ENCODE measurements at regions of chrX and their contacts with region 1.

Region 1: GRCh38 chrX:71565474-71566041 is 12.7 kb upstream of the GCNA start:
- DNase-seq: no peak
- ATAC-seq: peak in 2 of 8 donors; percentile 48 to 53
- H3K4me3 ChIP-seq: no peak overlapping the region
- H3K27ac ChIP-seq: peak overlapping the region in 1 of 10 donors; percentile 22
- H3K4me1 ChIP-seq: peaks cover 0 to 12% (median 0%) of the 10 kb centered on the region in 9 donors
- H3K27me3 ChIP-seq: peaks cover 0 to 16% (median 0%) of the 10 kb centered on the region in 7 donors
- CTCF ChIP-seq: no peak

Region 2: GRCh38 chrX:71378732-71379131 is 186.8 kb before region 1 on chrX:
- intact Hi-C with region 1: loop called in 1 of 10 experiments (anchors 10 kb)
- DNase-seq: no peak
- ATAC-seq: peak in 3 of 8 donors; percentile 45 to 63 (median 52)
- H3K4me3 ChIP-seq: no peak overlapping the region
- H3K27ac ChIP-seq: peak overlapping the region in 1 of 10 donors; percentile 31
- H3K4me1 ChIP-seq: no peaks in the 10 kb centered on the region
- H3K27me3 ChIP-seq: no peaks in the 10 kb centered on the region
- CTCF ChIP-seq: no peak

Region 3: GRCh38 chrX:71393919-71394318 is 171.6 kb before region 1 on chrX:
- intact Hi-C with region 1: loop called in 2 of 10 experiments (anchors 10 kb)
- DNase-seq: no peak
- ATAC-seq: no peak
- H3K4me3 ChIP-seq: no peak overlapping the region
- H3K27ac ChIP-seq: no peak overlapping the region
- H3K4me1 ChIP-seq: no peaks in the 10 kb centered on the region
- H3K27me3 ChIP-seq: no peaks in the 10 kb centered on the region
- CTCF ChIP-seq: no peak

Region 4: GRCh38 chrX:71400710-71401109 is 164.8 kb before region 1 on chrX:
- intact Hi-C with region 1: loop called in 2 of 10 experiments (anchors 10 kb)
- DNase-seq: no peak
- ATAC-seq: no peak
- H3K4me3 ChIP-seq: no peak overlapping the region
- H3K27ac ChIP-seq: no peak overlapping the region
- H3K4me1 ChIP-seq: no peaks in the 10 kb centered on the region
- H3K27me3 ChIP-seq: no peaks in the 10 kb centered on the region
- CTCF ChIP-seq: no peak

Region 5: GRCh38 chrX:71420686-71421085 is 144.9 kb before region 1 on chrX:
- intact Hi-C with region 1: loop called in 1 of 10 experiments (anchors 10 kb)
- DNase-seq: no peak
- ATAC-seq: peak in 1 of 8 donors; percentile 17
- H3K4me3 ChIP-seq: no peak overlapping the region
- H3K27ac ChIP-seq: no peak overlapping the region
- H3K4me1 ChIP-seq: no peaks in the 10 kb centered on the region
- H3K27me3 ChIP-seq: peaks cover 0 to 8% (median 0%) of the 10 kb centered on the region in 7 donors
- CTCF ChIP-seq: no peak

Measured in heart right ventricle (tissue), 16 donors.